ENCODE measurements at regions of chr17 and their contacts with region 1.

Region 1: DNA sequence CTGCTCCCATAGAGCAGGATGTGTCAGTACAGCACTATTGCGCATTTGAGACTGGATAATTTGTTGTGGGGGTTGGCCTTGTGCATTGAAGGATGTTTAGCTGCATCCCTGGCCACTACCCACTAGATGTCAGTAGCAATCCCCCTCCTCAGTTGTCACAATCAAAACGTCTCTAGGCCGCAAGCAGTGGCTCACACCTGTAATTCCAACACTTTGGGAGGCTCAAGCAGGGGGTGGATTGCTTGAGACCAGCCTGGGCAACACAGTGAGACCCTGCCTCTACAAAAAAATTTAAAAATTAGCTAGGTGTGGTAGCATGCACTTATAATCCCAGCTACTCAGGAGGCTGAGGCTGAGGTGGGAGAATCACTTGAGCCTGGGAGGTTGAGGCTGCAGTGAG is 48.4 kb downstream of the CENPV start:
- DNase-seq: no peak
- ATAC-seq: peak; percentile 78
- H3K4me3 ChIP-seq: no peak overlapping the region
- H3K27ac ChIP-seq: no peak overlapping the region
- H3K4me1 ChIP-seq: no peaks in the 10 kb centered on the region
- H3K27me3 ChIP-seq: no peaks in the 10 kb centered on the region
- CTCF ChIP-seq: peak; percentile 46 to 61 (median 51)
- EP300 ChIP-seq: no peak
- POLR2A ChIP-seq: no peak
- RAD21 ChIP-seq: peak; percentile 45

Region 2: DNA sequence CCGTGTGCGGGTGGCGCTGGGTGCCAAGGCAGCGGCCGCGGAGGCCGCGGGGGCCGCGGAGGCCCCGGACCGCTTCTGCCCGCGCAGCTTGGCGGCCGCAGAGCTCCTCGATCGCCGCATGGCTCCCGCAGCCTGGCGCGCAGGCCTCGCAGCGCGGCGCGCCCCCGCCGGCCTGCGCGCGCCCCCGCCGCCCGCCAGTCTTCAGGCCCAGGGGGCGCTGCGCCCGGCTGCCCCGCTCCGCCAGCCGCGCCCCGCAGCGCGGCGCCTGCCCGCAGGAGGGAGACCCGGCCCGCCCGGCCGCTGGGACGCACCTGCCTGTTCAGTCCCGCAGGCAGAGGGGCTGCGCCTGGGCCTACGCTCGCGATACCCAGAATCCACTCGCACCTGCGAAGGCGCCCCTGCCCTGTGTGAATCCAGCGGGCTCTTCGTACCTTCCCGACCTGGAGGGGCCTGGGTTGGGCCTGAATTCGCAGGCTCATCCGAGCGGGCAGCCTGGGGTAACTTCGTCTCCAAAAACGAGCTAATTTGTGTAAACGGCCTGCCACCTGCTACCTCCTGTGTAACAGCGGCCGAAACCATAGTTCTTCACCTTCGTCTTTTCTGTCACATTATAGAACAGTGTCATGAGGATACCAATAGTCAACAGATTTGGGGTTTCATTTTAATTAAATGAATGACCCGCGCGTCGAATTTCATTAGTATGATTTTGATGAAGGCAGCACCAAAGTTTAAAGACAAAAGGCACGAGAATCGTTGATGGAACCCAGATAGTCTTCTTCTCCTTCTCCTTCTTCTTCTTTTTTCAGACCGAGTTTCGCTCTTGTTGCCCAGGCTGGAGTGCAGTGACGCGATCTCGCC is 48.7 kb after region 1 on chr17 and contains the start of gene CENPV:
- CTCF ChIA-PET with region 1: interaction called, 10 read pairs
- POLR2A ChIA-PET with region 1: no interaction called
- RAD21 ChIA-PET with region 1: interaction called, 8 read pairs
- SMC1A ChIA-PET with region 1: interaction called, 3 read pairs
- in situ Hi-C with region 1: no loop called
- intact Hi-C with region 1: no loop called
- DNase-seq: no peak
- ATAC-seq: peak; percentile 75
- H3K4me3 ChIP-seq: peak within 1 kb of the TSS; percentile 83
- H3K27ac ChIP-seq: peak within 1 kb of the TSS; percentile 61
- H3K4me1 ChIP-seq: peaks cover 3% of the 10 kb centered on the region; the same call in 1 of the 2 replicates
- H3K27me3 ChIP-seq: no peaks in the 10 kb centered on the region
- CTCF ChIP-seq: peak in 1 of 3 experiments; percentile 36; a peak in 2 of 6 replicates
- EP300 ChIP-seq: no peak
- POLR2A ChIP-seq: peak; percentile 76
- RAD21 ChIP-seq: peak; percentile 11; the same call in 1 of the 2 replicates
- polyA plus RNA-seq, gene CENPV: 22.5 to 68.0 TPM